ENCODE measurements at regions of chr11 and their contacts with region 1.

Region 1: GRCh38 chr11:62855571-62856332 is 16.4 kb upstream of the WDR74 start:
- DNase-seq: peak; percentile 99
- ATAC-seq: peak; percentile 85
- H3K4me3 Mint-ChIP-seq: peak overlapping the region; percentile 99
- H3K27ac Mint-ChIP-seq: peak overlapping the region; percentile 98
- H3K4me1 Mint-ChIP-seq: peaks cover 69% of the 10 kb centered on the region
- H3K27me3 Mint-ChIP-seq: no peaks in the 10 kb centered on the region

Region 2: GRCh38 chr11:62612366-62613290 is 243.1 kb before region 1 on chr11 and contains the starts of genes EML3 and ROM1:
- CTCF ChIA-PET with region 1: no interaction called
- POLR2A ChIA-PET with region 1: interaction called, 12 read pairs
- DNase-seq: peak; percentile 92
- ATAC-seq: peak; percentile 78
- H3K4me3 Mint-ChIP-seq: peak within 1 kb of the TSS; percentile 88
- H3K27ac Mint-ChIP-seq: peak within 1 kb of the TSS; percentile 96
- H3K4me1 Mint-ChIP-seq: peaks cover 56% of the 10 kb centered on the region
- H3K27me3 Mint-ChIP-seq: no peaks in the 10 kb centered on the region
- total RNA-seq, gene EML3: 120 to 144 TPM
- total RNA-seq, gene ROM1: 1.3 to 2.0 TPM

Region 3: DNA sequence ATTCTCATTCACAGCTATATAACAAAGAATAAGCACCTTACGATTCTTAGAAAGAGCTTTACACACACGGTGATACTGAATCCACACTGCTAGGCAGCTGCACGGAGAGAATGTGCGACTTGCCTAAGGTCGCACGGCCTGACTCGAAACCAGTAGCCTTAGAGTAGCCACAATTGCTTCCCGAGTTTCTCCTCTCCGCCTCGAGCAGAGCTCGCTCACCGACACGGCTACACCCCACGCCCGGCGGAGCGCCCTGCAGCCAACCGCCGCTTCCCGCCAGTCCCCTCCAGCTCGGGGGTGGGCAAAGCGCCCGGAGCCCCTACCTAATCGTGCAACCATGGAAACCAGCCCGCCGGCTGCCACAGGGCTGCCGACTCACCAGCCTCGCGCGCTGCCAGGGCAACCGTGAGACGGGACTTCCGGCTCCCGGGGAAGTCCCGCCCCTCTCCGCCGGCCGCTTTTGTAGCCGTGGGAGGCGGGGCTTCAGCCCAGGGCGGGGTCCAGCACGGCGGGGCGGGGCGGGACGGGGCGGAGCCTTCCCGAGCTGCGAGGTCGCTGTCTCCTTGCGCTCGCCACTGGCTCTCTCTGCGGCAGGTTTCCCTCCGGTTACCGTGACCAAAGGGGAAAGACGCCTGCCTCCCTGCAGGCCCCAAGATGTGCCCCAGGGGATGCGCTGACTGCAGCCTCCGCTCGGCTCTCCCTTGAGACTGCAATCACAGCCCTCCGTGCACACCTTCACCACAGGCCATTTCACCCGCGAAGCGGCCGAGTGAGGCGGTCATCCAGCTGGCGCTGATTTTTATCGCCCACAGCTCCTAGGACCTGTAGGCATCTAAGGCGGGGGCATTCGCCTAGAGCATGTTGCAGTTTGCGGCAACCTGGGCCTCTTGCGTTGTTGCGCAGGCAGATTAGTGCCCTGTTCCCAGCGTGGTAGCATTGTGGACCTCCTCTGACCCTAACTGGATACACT is 149.6 kb before region 1 on chr11:
- CTCF ChIA-PET with region 1: interaction called, 3 read pairs
- POLR2A ChIA-PET with region 1: interaction called, 27 read pairs
- DNase-seq: peak; percentile 95
- ATAC-seq: peak; percentile 67
- H3K4me3 Mint-ChIP-seq: peak overlapping the region; percentile 90
- H3K27ac Mint-ChIP-seq: peak overlapping the region; percentile 83
- H3K4me1 Mint-ChIP-seq: peaks cover 49% of the 10 kb centered on the region
- H3K27me3 Mint-ChIP-seq: no peaks in the 10 kb centered on the region

Region 4: DNA sequence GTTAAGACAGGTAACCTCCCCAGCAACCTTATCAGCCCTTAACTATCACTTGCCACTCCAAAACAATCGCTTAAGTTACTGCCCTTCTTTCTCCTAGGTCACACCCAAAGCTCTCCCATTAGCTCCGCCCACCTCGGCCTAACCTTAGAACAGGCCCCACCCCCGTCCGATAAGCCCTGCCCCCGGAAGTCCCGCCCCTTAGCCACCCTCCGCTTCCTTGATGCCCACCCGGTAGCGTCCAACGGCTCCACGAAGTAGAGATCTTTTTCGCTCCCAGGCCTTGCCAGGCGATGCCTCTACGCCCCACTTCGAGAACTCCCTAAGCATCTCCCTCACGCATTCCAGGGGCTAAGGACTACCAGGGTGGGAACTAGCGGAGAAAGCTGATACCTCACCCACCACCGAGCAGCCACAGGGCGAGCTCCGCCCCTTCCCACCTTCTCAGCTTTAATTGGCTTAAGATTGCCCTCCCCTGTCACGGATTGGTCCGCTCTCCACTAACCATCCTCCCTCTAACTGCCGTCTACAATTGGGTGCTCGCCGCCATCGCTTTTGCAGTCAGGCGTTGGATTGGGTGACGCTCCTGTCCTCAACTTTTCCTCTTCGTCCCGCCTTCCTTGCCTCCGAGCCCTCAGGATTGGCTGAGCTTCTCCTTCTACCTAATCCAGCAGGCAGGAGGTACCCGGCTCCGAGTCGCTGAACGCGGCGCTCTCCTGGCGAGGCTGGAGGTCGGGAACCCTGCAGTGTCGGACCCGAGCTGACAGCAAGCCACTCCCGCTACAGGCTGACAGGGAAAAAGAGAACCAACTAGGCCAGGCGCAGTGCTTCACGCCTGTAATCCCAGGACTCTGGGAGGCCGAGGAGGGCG is 101.8 kb before region 1 on chr11 and contains the start of gene ZBTB3:
- CTCF ChIA-PET with region 1: interaction called, 5 read pairs
- POLR2A ChIA-PET with region 1: interaction called, 14 read pairs
- DNase-seq: peak; percentile 99
- ATAC-seq: peak; percentile 99
- H3K4me3 Mint-ChIP-seq: peak within 1 kb of the TSS; percentile 94
- H3K27ac Mint-ChIP-seq: peak within 1 kb of the TSS; percentile 97
- H3K4me1 Mint-ChIP-seq: peaks cover 31% of the 10 kb centered on the region
- H3K27me3 Mint-ChIP-seq: no peaks in the 10 kb centered on the region
- total RNA-seq, gene ZBTB3: 12.4 to 12.8 TPM

Region 5: DNA sequence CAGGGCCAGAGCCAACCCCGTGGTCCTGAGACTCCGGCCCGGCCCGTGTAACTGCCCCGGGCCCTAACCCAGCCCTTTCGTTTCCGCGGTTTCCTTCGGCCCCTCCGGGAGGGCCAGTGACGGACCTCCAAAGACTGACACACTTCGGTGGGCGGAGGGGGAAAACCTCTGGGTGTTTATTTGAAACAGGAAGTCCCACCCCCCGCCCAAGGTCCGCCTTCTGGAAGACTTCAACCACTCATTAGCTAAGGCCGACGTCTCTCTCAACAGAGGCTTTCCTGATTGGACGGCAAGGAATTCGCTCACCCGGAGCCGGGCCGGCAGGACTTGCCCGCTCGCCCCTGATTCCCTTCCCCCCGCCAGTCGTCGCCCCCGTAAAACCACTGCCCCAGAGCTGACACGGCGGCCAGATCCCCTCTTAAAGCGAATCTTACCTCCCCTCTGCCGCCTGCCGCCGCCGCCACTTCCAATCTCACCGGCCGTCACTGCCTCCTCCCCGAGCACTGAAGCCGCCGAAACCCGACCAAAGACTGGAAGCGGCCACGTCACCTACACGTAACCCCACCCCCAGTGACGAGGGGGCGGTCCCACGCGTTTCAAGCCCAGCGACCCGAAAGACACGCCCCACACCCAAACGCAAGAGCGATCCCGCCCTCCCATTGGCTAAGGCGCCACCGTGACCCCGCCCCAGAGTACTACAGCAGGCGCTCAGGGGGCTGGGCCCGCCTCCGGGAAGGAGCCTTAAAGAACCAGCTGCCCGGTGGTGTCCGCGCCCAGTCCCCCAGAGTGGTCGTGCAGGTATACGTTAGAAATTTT is 24.0 kb before region 1 on chr11 and contains the start of gene STX5:
- CTCF ChIA-PET with region 1: interaction called, 6 read pairs
- POLR2A ChIA-PET with region 1: interaction called, 51 read pairs
- DNase-seq: peak; percentile 100
- ATAC-seq: peak; percentile 91
- H3K4me3 Mint-ChIP-seq: peak within 1 kb of the TSS; percentile 92
- H3K27ac Mint-ChIP-seq: peak within 1 kb of the TSS; percentile 98
- H3K4me1 Mint-ChIP-seq: peaks cover 39% of the 10 kb centered on the region
- H3K27me3 Mint-ChIP-seq: no peaks in the 10 kb centered on the region
- total RNA-seq, gene STX5: 30.4 to 32.7 TPM

Region 6: DNA sequence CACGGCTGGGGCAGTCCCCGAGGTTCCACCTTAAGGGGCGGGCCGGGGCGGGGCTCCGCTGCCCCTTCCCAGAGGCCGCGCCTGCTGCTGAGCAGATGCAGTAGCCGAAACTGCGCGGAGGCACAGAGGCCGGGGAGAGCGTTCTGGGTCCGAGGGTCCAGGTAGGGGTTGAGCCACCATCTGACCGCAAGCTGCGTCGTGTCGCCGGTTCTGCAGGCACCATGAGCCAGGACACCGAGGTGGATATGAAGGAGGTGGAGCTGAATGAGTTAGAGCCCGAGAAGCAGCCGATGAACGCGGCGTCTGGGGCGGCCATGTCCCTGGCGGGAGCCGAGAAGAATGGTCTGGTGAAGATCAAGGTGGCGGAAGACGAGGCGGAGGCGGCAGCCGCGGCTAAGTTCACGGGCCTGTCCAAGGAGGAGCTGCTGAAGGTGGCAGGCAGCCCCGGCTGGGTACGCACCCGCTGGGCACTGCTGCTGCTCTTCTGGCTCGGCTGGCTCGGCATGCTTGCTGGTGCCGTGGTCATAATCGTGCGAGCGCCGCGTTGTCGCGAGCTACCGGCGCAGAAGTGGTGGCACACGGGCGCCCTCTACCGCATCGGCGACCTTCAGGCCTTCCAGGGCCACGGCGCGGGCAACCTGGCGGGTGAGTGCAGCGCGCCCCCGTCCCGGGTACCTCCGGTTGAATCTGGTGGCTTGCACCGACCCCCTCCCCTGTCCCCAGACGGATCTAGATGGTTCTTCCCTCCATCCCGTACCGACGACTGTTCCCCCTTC is 25.2 kb after region 1 on chr11 and contains the start of gene SLC3A2:
- CTCF ChIA-PET with region 1: interaction called, 20 read pairs
- POLR2A ChIA-PET with region 1: interaction called, 104 read pairs
- DNase-seq: peak; percentile 92
- ATAC-seq: peak; percentile 87
- H3K4me3 Mint-ChIP-seq: peak within 1 kb of the TSS; percentile 100
- H3K27ac Mint-ChIP-seq: peak within 1 kb of the TSS; percentile 100
- H3K4me1 Mint-ChIP-seq: peaks cover 49% of the 10 kb centered on the region
- H3K27me3 Mint-ChIP-seq: no peaks in the 10 kb centered on the region
- total RNA-seq, gene SLC3A2: 190 to 202 TPM